K562 (cell line): ENCODE measurements at regions of chr19 and their contacts with region 1.

Region 1: DNA sequence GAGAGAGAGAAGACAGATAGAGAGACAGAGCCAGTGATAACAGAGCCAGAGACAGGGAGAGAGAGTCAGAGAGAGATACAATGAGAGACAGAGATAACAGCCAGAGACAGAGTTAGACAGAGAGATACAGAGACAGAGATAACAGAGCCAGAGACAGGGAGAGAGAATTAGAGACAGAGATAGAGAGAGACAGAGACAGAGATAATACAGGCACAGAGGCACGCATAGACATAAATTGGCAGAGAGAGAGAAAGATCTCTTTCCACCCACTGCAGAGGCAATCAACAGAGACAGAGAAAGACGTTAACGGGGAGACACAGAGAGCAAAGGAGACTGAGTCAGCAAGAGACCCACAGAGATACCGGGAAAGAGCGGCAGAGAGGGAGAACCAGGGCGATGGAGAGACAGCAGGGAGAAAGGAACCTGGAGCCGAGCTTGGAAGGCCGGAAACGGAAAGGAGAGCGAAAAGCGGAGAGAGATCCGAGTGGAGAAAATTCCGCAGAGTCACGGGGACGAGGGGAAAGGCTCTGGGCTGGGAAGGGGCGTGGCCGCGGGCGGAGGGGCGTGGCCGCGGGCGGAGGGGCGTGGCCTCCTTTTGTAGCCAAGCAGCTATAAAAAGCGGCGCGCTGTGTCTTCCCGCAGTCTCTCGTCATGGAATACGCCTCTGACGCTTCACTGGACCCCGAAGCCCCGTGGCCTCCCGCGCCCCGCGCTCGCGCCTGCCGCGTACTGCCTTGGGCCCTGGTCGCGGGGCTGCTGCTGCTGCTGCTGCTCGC is at the start of gene TNFSF9:
- DNase-seq: peak; percentile 87 to 95 (median 92)
- ATAC-seq: peak; percentile 84
- H3K4me3 ChIP-seq: peak within 1 kb of the TSS; percentile 83
- H3K27ac ChIP-seq: peak within 1 kb of the TSS; percentile 99
- H3K4me1 ChIP-seq: peaks cover 33 to 59% of the 10 kb centered on the region in 2 experiments
- H3K27me3 ChIP-seq: no peaks in the 10 kb centered on the region
- CTCF ChIP-seq: no peak
- EP300 ChIP-seq: no peak; the same call in 1 of the 2 replicates
- POLR2A ChIP-seq: peak; percentile 96
- RAD21 ChIP-seq: no peak
- polyA plus RNA-seq, gene TNFSF9: 1.4 to 2.1 TPM

Region 2: DNA sequence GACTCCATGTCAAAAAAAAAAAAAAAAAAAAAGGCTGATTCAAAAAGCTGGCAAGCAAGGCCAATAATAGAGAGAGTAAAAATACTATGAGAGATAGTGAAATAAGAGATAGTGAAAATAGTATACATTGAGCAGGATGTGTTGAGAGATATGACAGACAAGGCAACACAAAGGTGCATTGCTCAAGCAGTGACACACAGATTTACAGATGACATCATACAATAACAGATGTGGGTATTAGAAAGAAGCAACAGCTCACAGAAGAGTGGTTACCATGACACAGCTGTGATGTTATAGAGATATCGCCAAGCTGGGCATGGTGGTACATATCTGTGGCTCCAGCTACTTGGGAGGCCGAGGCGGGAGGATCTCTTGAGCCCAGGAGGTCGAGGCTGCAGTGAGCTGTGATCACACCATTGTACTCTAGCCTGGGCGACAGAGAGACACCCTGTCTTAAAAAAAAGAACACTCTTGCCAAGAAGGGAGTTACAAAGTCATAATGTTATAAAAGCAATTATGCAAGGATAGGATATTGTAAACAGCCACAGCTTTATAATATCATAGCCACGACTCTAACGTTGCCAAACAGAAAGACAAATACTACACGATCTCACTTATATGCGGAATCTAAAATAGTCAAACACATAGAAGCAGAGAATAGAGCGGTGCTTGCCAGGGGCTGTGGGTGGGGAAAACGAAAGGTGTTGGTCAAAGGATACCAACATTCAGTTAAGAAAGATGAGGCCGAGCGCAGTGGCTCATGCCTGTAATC is 10.5 kb after region 1 on chr19:
- CTCF ChIA-PET with region 1: no interaction called
- POLR2A ChIA-PET with region 1: interaction called, 21 read pairs
- in situ Hi-C with region 1: no loop called
- intact Hi-C with region 1: no loop called
- DNase-seq: no peak
- ATAC-seq: no peak
- H3K4me3 ChIP-seq: no peak overlapping the region
- H3K27ac ChIP-seq: no peak overlapping the region
- H3K4me1 ChIP-seq: peaks cover 0 to 2% of the 10 kb centered on the region in 2 experiments; a peak in 1 of 5 replicates
- H3K27me3 ChIP-seq: no peaks in the 10 kb centered on the region
- CTCF ChIP-seq: no peak
- EP300 ChIP-seq: no peak
- POLR2A ChIP-seq: no peak
- RAD21 ChIP-seq: no peak

Region 3: GRCh38 chr19:6602729-6603114 is 72.1 kb after region 1 on chr19:
- CTCF ChIA-PET with region 1: no interaction called
- POLR2A ChIA-PET with region 1: interaction called, 22 read pairs
- in situ Hi-C with region 1: no loop called
- intact Hi-C with region 1: no loop called
- DNase-seq: peak in 1 of 4 experiments; percentile 60
- ATAC-seq: peak; percentile 63
- H3K4me3 ChIP-seq: peak overlapping the region; percentile 49
- H3K27ac ChIP-seq: peak overlapping the region; percentile 94
- H3K4me1 ChIP-seq: peaks cover 9 to 23% of the 10 kb centered on the region in 2 experiments; a peak in 4 of 5 replicates
- H3K27me3 ChIP-seq: no peaks in the 10 kb centered on the region
- CTCF ChIP-seq: no peak
- EP300 ChIP-seq: no peak
- POLR2A ChIP-seq: peak; percentile 58; the same call in 1 of the 2 replicates
- RAD21 ChIP-seq: no peak

Region 4: GRCh38 chr19:6654347-6655310 is 124.1 kb after region 1 on chr19:
- CTCF ChIA-PET with region 1: no interaction called
- POLR2A ChIA-PET with region 1: no interaction called
- in situ Hi-C with region 1: no loop called
- intact Hi-C with region 1: no loop called
- DNase-seq: peak in 1 of 4 experiments; percentile 14
- ATAC-seq: peak; percentile 57
- H3K4me3 ChIP-seq: no peak overlapping the region
- H3K27ac ChIP-seq: no peak overlapping the region
- H3K4me1 ChIP-seq: peaks cover 14 to 22% of the 10 kb centered on the region in 2 experiments; a peak in 4 of 5 replicates
- H3K27me3 ChIP-seq: peaks cover 0 to 12% of the 10 kb centered on the region in 2 experiments; a peak in 2 of 5 replicates
- CTCF ChIP-seq: no peak
- EP300 ChIP-seq: no peak
- POLR2A ChIP-seq: no peak
- RAD21 ChIP-seq: no peak